GM10248 (cell line): ENCODE measurements at regions of chr14 and their contacts with region 1.

Region 1: DNA sequence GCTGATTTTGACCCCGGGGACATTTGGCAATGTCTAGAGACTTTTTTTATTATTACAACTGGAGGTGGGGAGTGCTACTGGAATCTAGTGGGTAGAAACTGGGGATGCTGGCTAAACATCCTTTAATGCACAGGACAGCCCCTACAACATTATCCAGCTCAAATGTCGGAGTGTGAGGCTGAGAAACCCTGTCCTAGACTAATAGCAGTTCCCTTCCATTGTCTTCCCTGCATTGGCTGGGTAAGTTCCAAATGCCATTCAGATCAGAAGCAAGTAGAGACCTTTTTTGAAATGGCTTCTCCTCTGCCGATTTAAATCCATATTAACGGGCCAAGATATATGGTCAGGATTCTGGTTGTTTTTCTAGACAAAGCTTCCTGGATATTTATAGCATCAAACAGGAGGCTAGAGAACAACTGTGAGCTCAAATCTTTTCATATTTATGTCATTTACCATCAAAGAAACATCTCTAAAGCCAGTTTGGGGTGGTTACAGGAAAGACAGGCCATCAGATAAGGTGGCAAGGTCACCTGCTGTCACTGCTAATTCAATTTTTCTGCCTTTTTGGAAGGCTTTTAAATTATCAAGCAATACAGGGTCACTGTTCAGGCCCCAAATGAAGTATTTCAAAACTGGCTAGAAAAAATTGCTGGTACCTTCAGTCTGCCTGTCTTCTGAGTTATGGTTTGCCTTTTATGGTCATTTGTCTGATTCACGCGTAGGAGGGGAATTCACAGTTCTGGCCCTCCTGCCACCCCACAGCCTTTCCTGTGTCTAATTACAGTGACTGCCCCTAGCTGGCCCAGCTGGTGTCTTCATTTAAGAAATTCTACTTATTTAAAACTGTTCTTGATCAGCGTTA is 20.1 kb upstream of the AKAP5 start:
- DNase-seq: peak; percentile 83
- CTCF ChIP-seq: no peak

Region 2: DNA sequence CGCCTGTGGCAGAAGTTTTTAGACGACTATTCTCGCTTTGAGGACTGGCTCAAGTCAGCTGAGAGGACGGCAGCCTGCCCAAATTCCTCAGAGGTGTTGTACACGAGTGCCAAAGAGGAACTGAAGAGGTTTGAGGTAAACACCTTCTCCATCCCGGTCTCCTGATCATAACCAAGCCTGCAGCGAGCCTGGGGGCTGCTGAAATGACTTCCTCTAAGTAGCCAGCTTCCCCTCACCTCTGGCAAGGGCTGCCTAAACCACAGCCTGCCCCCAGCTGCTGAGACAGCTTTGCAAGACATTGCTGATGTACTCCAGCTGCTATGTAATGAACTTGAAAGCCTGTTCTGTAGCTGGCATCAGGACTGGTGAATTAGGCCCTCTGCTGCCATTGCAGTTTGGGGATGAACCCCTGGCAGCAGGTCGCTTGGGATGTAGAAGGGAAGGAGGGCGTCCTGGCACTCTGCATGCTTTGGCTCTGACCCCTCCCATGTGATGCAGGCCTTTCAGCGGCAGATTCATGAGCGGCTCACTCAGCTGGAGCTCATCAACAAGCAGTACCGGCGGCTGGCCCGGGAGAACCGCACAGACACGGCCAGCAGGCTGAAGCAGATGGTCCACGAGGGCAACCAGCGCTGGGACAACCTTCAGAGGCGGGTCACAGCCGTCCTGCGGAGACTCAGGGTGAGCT is 235.6 kb before region 1 on chr14:
- CTCF ChIA-PET with region 1: no interaction called
- POLR2A ChIA-PET with region 1: no interaction called
- DNase-seq: peak; percentile 48
- CTCF ChIP-seq: no peak

Region 3: DNA sequence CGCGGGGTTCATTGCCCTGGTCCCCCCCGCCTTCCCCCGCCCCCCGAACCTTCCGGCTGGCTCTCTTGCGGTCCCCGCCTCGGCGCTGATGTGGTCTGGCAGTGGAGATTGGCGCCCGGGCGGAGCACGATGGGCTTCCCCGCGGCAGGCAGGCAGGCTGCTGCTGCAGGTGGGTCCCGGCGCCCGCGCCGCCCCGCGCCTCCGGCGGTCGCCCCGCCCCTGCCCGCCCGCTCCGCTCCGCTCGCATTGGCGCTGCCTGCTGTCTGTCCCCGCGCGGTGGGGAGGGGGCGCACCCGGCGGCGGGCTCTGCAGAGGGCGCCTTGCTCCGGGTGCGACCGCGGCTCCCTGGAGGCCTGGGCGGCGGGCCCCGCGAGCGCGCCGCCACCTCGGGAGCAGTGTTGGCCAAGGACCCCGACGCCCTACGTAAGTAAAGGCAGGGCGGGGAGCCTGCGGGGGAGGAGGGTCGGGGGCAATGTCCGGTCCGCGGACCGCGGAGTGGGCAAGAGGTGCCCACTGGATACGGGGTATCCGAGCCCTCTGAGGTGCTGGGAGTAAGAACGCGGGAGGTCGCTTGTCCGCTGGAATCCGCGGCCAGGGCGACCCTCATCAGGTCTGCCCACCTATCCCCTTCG is 20.1 kb after region 1 on chr14 and contains the start of gene AKAP5:
- CTCF ChIA-PET with region 1: interaction called, 25 read pairs
- POLR2A ChIA-PET with region 1: interaction called, 4 read pairs
- DNase-seq: peak; percentile 78
- CTCF ChIP-seq: no peak

Region 4: GRCh38 chr14:64654246-64654900 is 209.2 kb after region 1 on chr14:
- CTCF ChIA-PET with region 1: no interaction called
- POLR2A ChIA-PET with region 1: no interaction called
- DNase-seq: no peak
- CTCF ChIP-seq: no peak